ENCODE measurements at regions of chr9 and their contacts with region 1.

Region 1: DNA sequence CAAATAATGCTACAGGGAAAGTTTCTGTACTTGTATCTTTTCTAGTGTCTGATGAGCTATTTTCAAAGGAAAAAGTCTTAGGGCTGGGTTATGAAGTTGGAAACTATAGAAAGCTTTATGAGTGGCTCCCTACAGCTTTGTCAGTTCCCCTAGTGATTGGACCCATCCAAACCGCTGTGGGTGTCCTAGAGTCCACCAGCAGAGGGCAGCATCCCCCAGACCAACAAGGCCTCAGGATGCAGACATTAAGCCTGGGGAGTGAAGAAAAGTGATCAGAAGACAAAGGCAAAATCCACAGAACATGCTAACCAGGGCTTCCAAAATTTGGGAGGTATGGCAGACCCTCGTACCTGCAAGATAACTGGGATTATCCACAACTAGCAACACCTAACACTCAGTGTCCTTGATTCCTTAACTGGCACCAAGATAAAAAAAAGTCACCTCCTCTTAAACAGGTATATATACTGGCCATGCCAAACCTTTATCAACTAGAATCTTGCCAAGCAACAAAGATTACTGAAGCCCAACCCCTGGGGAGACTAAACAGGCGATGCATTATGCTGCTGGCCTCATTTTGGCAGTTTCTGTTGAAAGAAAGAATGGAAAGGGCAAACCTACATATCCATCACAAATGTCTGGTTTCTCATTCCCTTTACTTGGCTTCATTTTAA is 110.4 kb upstream of the NR5A1 start:
- DNase-seq: peak; percentile 58 to 93
- H3K4me3 ChIP-seq: peak overlapping the region in 1 of 4 experiments; percentile 16; a peak in 1 of 8 replicates
- H3K27ac ChIP-seq: peak overlapping the region; percentile 30
- H3K4me1 ChIP-seq: peaks cover 0 to 21% (median 10%) of the 10 kb centered on the region in 4 experiments; a peak in 4 of 7 replicates
- H3K27me3 ChIP-seq: no peaks in the 10 kb centered on the region
- CTCF ChIP-seq: peak; percentile 89 to 94 (median 89)
- EP300 ChIP-seq: no peak
- POLR2A ChIP-seq: no peak
- RAD21 ChIP-seq: peak; percentile 92 to 97

Region 2: DNA sequence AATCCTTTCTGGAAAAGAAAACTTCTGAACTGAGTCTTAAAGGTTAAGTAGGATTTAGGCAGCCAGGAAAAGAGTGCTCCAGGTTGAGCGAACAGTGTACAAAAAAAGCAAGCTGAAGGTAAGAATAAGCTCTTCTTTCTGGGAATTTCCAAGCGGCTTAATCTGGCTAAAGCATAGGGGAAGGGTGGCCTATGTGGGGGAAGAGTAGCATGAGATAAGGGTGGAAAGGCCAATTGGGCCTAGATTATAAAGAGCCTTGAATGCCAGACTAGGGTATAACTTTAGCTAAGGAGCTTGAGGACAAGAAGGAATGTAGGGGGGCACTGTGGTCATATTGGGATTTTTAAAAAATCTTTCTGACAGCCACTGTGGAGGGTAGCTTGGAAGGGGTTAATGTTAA is 73.1 kb before region 1 on chr9:
- CTCF ChIA-PET with region 1: interaction called, 86 read pairs
- POLR2A ChIA-PET with region 1: no interaction called
- DNase-seq: no peak
- H3K4me3 ChIP-seq: no peak overlapping the region
- H3K27ac ChIP-seq: no peak overlapping the region
- H3K4me1 ChIP-seq: peaks cover 0 to 3% (median 0%) of the 10 kb centered on the region in 4 experiments; a peak in 2 of 7 replicates
- H3K27me3 ChIP-seq: no peaks in the 10 kb centered on the region
- CTCF ChIP-seq: no peak
- EP300 ChIP-seq: no peak
- POLR2A ChIP-seq: no peak
- RAD21 ChIP-seq: no peak

Region 3: DNA sequence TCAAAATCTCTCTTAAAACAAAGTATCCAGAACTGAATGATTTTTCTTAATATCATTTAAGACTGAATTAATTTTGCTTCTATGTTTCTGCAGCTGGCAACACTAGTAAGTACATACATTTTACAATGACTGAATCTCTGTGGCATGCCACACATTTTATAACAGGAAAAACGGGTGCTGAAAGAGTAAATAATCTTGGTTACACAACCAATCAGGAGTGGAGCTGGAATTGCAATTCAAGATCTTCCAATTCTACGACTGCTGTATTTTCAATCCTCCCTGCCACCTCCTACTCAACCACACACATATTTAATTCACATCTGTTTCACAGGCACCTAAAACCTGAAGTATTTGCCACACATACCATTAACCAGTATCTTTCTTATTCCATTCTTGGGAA is 57.7 kb before region 1 on chr9:
- CTCF ChIA-PET with region 1: interaction called, 22 read pairs
- POLR2A ChIA-PET with region 1: interaction called, 7 read pairs
- DNase-seq: no peak
- H3K4me3 ChIP-seq: no peak overlapping the region
- H3K27ac ChIP-seq: no peak overlapping the region
- H3K4me1 ChIP-seq: peaks cover 0 to 4% (median 1%) of the 10 kb centered on the region in 4 experiments; a peak in 4 of 7 replicates
- H3K27me3 ChIP-seq: no peaks in the 10 kb centered on the region
- CTCF ChIP-seq: no peak
- EP300 ChIP-seq: no peak
- POLR2A ChIP-seq: no peak
- RAD21 ChIP-seq: no peak

Region 4: GRCh38 chr9:124574534-124575341 is 42.9 kb before region 1 on chr9:
- CTCF ChIA-PET with region 1: interaction called, 25 read pairs
- POLR2A ChIA-PET with region 1: no interaction called
- DNase-seq: no peak
- H3K4me3 ChIP-seq: no peak overlapping the region
- H3K27ac ChIP-seq: no peak overlapping the region
- H3K4me1 ChIP-seq: peaks cover 0 to 17% (median 5%) of the 10 kb centered on the region in 4 experiments; a peak in 4 of 7 replicates
- H3K27me3 ChIP-seq: no peaks in the 10 kb centered on the region
- CTCF ChIP-seq: no peak
- EP300 ChIP-seq: no peak
- POLR2A ChIP-seq: no peak
- RAD21 ChIP-seq: no peak

Region 5: DNA sequence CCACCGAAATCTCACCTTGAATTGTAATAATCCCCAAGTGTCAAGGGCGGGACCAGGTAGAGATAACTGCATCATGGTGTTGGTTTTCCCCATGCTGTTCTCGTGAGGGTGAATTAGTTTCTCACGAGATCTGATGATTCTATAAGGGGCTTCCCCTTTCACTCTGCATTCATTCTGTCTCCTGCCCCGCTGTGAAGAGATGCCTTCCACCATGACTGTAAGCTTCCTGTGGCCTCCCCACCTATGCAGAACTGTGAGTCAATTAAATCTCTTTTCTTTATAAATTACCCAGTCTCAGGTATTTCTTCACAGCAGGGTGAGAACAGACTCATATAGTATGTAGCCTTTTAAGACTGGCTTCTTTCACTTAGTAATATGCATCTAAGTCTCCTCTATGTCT is 17.7 kb after region 1 on chr9:
- CTCF ChIA-PET with region 1: interaction called, 46 read pairs
- POLR2A ChIA-PET with region 1: interaction called, 3 read pairs
- DNase-seq: no peak
- H3K4me3 ChIP-seq: no peak overlapping the region
- H3K27ac ChIP-seq: no peak overlapping the region
- H3K4me1 ChIP-seq: peaks cover 0 to 3% (median 0%) of the 10 kb centered on the region in 4 experiments; a peak in 2 of 7 replicates
- H3K27me3 ChIP-seq: no peaks in the 10 kb centered on the region
- CTCF ChIP-seq: no peak
- EP300 ChIP-seq: no peak
- POLR2A ChIP-seq: no peak
- RAD21 ChIP-seq: no peak

Region 6: GRCh38 chr9:124652203-124652992 is 34.8 kb after region 1 on chr9:
- CTCF ChIA-PET with region 1: interaction called, 16 read pairs
- POLR2A ChIA-PET with region 1: no interaction called
- DNase-seq: no peak
- H3K4me3 ChIP-seq: no peak overlapping the region
- H3K27ac ChIP-seq: no peak overlapping the region
- H3K4me1 ChIP-seq: no peaks in the 10 kb centered on the region
- H3K27me3 ChIP-seq: no peaks in the 10 kb centered on the region
- CTCF ChIP-seq: no peak
- EP300 ChIP-seq: no peak
- POLR2A ChIP-seq: no peak
- RAD21 ChIP-seq: no peak

Measured in H1 (cell line).